Activated CD8-positive, alpha-beta T cell treated with anti-CD3 and anti-CD28 coated beads, Interleukin-2, amount 10 ng/mL, durations not matched to agents 7 days and 5 days (primary cell): ENCODE measurements at regions of chr6 and their contacts with region 1.

Region 1: DNA sequence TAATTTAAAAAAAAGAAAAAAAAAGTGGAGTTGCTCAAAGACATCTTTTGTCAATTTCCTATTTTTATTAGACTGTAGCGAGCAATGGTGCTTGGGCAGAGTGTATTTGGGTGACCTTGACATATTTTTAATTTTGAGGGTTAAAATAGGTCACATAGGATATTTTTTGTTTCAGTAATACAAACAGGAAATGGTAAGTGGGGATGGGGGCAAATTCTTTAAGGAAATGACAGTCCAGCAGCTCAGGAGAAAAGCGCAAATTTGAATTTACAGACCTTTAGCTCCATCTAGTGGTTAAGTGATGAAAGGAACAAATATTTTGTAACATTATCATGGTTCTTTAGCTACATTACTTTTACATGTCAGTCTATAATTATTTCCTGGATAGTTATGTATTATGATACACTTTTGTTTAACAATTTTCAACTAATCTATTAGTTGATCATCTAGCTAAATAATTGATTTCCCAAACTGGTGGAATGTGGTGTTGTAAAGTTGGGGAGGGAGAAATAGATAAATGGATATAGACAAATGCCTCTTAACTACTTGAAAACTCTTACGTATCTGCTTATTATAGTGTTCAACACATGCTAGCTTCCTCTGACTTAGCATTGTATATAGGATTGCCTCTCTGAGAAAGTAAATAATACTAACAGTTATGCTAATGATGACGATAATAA is 10.0 kb downstream of the CITED2 start:
- DNase-seq: no peak
- ATAC-seq: peak; percentile 35
- H3K4me3 Mint-ChIP-seq: no peak overlapping the region
- H3K27ac Mint-ChIP-seq: no peak overlapping the region
- H3K4me1 Mint-ChIP-seq: peaks cover 41% of the 10 kb centered on the region
- H3K27me3 Mint-ChIP-seq: no peaks in the 10 kb centered on the region

Region 2: GRCh38 chr6:138817822-138818308 is 546.6 kb before region 1 on chr6:
- CTCF ChIA-PET with region 1: interaction called, 19 read pairs
- POLR2A ChIA-PET with region 1: no interaction called
- DNase-seq: peak; percentile 21
- ATAC-seq: no peak
- H3K4me3 Mint-ChIP-seq: no peak overlapping the region
- H3K27ac Mint-ChIP-seq: no peak overlapping the region
- H3K4me1 Mint-ChIP-seq: peaks cover 24% of the 10 kb centered on the region
- H3K27me3 Mint-ChIP-seq: no peaks in the 10 kb centered on the region

Region 3: GRCh38 chr6:139124887-139125672 is 239.4 kb before region 1 on chr6:
- CTCF ChIA-PET with region 1: interaction called, 48 read pairs
- POLR2A ChIA-PET with region 1: interaction called, 4 read pairs
- DNase-seq: peak; percentile 93
- ATAC-seq: peak; percentile 99
- H3K4me3 Mint-ChIP-seq: peak overlapping the region; percentile 67
- H3K27ac Mint-ChIP-seq: peak overlapping the region; percentile 93
- H3K4me1 Mint-ChIP-seq: peaks cover 41% of the 10 kb centered on the region
- H3K27me3 Mint-ChIP-seq: no peaks in the 10 kb centered on the region

Region 4: GRCh38 chr6:139173172-139173571 is 191.3 kb before region 1 on chr6:
- CTCF ChIA-PET with region 1: interaction called, 15 read pairs
- POLR2A ChIA-PET with region 1: no interaction called
- DNase-seq: peak; percentile 48
- ATAC-seq: peak; percentile 74
- H3K4me3 Mint-ChIP-seq: no peak overlapping the region
- H3K27ac Mint-ChIP-seq: peak overlapping the region; percentile 75
- H3K4me1 Mint-ChIP-seq: peaks cover 85% of the 10 kb centered on the region
- H3K27me3 Mint-ChIP-seq: no peaks in the 10 kb centered on the region

Region 5: GRCh38 chr6:139250296-139251044 is 114.0 kb before region 1 on chr6:
- CTCF ChIA-PET with region 1: interaction called, 20 read pairs
- POLR2A ChIA-PET with region 1: no interaction called
- DNase-seq: peak; percentile 68
- ATAC-seq: peak; percentile 82
- H3K4me3 Mint-ChIP-seq: peak overlapping the region; percentile 2
- H3K27ac Mint-ChIP-seq: peak overlapping the region; percentile 85
- H3K4me1 Mint-ChIP-seq: peaks cover 30% of the 10 kb centered on the region
- H3K27me3 Mint-ChIP-seq: no peaks in the 10 kb centered on the region

Region 6: GRCh38 chr6:139308936-139309603 is 55.4 kb before region 1 on chr6:
- CTCF ChIA-PET with region 1: no interaction called
- POLR2A ChIA-PET with region 1: no interaction called
- DNase-seq: no peak
- ATAC-seq: no peak
- H3K4me3 Mint-ChIP-seq: no peak overlapping the region
- H3K27ac Mint-ChIP-seq: no peak overlapping the region
- H3K4me1 Mint-ChIP-seq: no peaks in the 10 kb centered on the region
- H3K27me3 Mint-ChIP-seq: peaks cover 4% of the 10 kb centered on the region

Region 7: GRCh38 chr6:139375232-139376016 is 11.0 kb after region 1 on chr6:
- CTCF ChIA-PET with region 1: interaction called, 40 read pairs
- POLR2A ChIA-PET with region 1: interaction called, 7 read pairs
- DNase-seq: peak; percentile 88
- ATAC-seq: peak; percentile 54
- H3K4me3 Mint-ChIP-seq: peak overlapping the region; percentile 99
- H3K27ac Mint-ChIP-seq: peak overlapping the region; percentile 100
- H3K4me1 Mint-ChIP-seq: peaks cover 34% of the 10 kb centered on the region
- H3K27me3 Mint-ChIP-seq: no peaks in the 10 kb centered on the region

Region 8: DNA sequence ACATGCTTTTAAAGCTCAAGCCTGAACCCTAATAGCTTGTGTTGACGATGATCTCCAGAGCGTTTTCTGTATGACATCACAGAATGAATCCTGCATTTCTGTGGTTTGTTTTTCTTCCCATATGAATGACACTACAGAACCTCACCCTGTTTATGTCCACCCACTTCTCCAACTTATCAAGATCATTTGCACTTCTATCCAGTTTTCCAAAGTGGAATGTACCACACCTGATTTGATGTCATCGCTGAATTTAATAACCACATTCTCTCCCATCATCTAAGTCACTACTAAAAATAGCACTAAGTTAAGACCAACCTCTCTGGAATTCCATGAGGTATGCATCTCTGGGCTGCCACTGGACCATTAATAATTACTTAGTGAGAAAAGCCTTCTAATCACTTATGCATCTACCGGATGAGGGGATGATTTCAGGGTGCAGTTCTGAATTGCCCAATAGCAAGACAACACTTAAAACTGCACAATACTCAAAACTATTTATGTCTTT is 43.3 kb after region 1 on chr6:
- CTCF ChIA-PET with region 1: no interaction called
- POLR2A ChIA-PET with region 1: no interaction called
- DNase-seq: no peak
- ATAC-seq: no peak
- H3K4me3 Mint-ChIP-seq: no peak overlapping the region
- H3K27ac Mint-ChIP-seq: no peak overlapping the region
- H3K4me1 Mint-ChIP-seq: no peaks in the 10 kb centered on the region
- H3K27me3 Mint-ChIP-seq: no peaks in the 10 kb centered on the region